Activated CD4-positive, alpha-beta T cell treated with anti-CD3 and anti-CD28 coated beads for 36 hours (primary cell): ENCODE measurements at regions of chr11 and their contacts with region 1.

Region 1: DNA sequence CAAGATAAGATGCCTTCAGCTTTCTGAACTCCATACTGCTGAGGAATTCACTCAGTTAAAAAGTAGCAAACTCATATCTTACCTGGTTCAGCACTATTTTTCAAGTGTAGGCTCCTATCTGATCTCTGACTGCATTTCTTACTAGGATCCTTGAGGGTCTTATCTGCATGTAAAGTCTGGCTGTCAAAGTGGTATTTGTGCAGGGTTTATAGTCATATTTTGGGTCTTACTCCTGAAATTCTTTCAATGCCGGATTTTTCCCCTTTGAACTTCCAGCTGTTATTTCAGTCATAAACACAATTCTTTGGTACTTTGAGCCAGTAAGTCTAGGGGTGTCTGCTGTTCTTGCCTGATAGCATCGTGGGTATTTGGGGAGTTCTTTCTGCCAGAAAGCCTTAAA is 25.3 kb upstream of the NOX4 start:
- DNase-seq: no peak
- ATAC-seq: no peak
- H3K4me3 Mint-ChIP-seq: no peak overlapping the region
- H3K27ac Mint-ChIP-seq: no peak overlapping the region
- H3K4me1 Mint-ChIP-seq: no peaks in the 10 kb centered on the region
- H3K27me3 Mint-ChIP-seq: no peaks in the 10 kb centered on the region

Region 2: DNA sequence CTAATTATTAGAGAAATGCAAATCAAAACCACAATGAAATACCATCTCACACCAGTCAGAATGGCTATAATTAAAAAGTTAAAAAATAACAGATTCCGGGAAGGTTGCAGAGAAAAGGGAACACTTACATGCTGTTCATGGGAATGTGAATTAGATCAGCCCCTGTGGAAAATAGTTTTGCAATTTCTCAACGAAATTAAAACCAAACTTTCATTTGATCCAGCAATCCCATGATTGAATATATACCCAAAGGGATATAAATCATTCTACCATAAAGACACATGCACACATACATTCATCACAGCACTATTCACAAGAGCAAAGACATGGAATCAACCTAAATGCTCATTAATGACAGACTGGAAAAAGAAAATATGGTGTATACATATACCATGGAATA is 57.8 kb before region 1 on chr11:
- CTCF ChIA-PET with region 1: no interaction called
- POLR2A ChIA-PET with region 1: no interaction called
- intact Hi-C with region 1: loop called in 1 of 2 experiments (anchors 10 kb)
- DNase-seq: no peak
- ATAC-seq: no peak
- H3K4me3 Mint-ChIP-seq: no peak overlapping the region
- H3K27ac Mint-ChIP-seq: no peak overlapping the region
- H3K4me1 Mint-ChIP-seq: no peaks in the 10 kb centered on the region
- H3K27me3 Mint-ChIP-seq: no peaks in the 10 kb centered on the region